ENCODE measurements at regions of chr5 and their contacts with region 1.

Region 1: DNA sequence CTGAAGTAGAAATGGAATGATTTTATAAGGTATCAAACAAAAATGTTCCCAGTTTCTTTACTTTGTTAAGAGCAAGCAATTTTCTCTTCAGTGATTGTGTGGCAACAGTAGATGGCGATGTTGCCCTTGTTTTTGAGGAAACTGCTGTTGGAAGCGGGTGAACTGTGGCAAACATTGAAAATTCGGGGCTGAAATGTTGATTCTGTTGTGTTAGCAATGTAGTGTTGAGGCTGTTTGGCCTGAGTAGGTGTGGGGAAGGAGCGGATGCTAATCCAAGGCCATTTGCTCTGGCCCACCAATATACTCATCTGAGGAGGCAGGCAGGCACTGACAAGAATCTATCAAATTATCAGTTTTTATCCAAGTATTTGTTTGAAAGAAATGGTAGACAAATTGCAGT is 129.8 kb downstream of the SLC12A2 start:
- DNase-seq: peak; percentile 40 to 52
- H3K4me3 ChIP-seq: no peak overlapping the region
- H3K27ac ChIP-seq: no peak overlapping the region
- H3K4me1 ChIP-seq: no peaks in the 10 kb centered on the region
- H3K27me3 ChIP-seq: no peaks in the 10 kb centered on the region
- CTCF ChIP-seq: peak; percentile 88

Region 2: GRCh38 chr5:127447827-127448226 is 765.5 kb before region 1 on chr5:
- CTCF ChIA-PET with region 1: no interaction called
- POLR2A ChIA-PET with region 1: no interaction called
- intact Hi-C with region 1: no loop called
- DNase-seq: no peak
- H3K4me3 ChIP-seq: no peak overlapping the region
- H3K27ac ChIP-seq: no peak overlapping the region
- H3K4me1 ChIP-seq: no peaks in the 10 kb centered on the region
- H3K27me3 ChIP-seq: no peaks in the 10 kb centered on the region
- CTCF ChIP-seq: no peak

Region 3: GRCh38 chr5:128498844-128499455 is 285.6 kb after region 1 on chr5:
- CTCF ChIA-PET with region 1: no interaction called
- POLR2A ChIA-PET with region 1: no interaction called
- intact Hi-C with region 1: loop called (anchors 1 kb)
- DNase-seq: no peak
- H3K4me3 ChIP-seq: no peak overlapping the region
- H3K27ac ChIP-seq: no peak overlapping the region
- H3K4me1 ChIP-seq: no peaks in the 10 kb centered on the region
- H3K27me3 ChIP-seq: no peaks in the 10 kb centered on the region
- CTCF ChIP-seq: peak; percentile 67

Region 4: DNA sequence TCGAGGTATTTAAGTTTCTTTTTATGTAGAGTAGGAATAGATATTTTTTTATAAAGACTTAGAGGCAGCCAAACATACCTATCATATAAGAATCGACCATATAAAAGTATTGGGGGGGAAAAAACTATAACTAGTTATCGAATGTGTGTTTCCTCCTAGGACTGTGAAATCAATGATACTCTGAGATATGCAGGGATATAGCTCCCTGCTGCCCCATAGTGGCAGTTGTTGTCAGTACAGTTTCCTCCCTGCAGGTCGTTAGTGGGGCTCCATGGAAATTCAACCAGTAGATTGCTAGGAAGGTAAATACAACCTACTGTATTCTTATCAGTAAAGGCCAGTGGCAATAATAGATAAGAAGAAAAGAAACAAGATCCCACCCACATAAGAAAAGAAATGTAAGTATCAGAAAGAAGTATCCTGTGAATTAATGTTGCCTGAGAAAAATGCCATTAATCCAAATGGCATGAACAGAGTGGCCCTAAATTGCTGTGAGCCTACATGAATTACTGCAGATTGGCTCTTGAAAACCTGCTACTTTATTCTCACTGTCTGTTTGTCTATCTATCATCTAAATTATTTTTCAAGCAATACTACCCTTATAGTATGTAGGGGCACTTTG is 461.6 kb after region 1 on chr5:
- CTCF ChIA-PET with region 1: no interaction called
- POLR2A ChIA-PET with region 1: no interaction called
- intact Hi-C with region 1: loop called (anchors 1 kb)
- DNase-seq: peak in 1 of 2 experiments; percentile 37
- H3K4me3 ChIP-seq: no peak overlapping the region
- H3K27ac ChIP-seq: no peak overlapping the region
- H3K4me1 ChIP-seq: no peaks in the 10 kb centered on the region
- H3K27me3 ChIP-seq: no peaks in the 10 kb centered on the region
- CTCF ChIP-seq: peak; percentile 71

Region 5: DNA sequence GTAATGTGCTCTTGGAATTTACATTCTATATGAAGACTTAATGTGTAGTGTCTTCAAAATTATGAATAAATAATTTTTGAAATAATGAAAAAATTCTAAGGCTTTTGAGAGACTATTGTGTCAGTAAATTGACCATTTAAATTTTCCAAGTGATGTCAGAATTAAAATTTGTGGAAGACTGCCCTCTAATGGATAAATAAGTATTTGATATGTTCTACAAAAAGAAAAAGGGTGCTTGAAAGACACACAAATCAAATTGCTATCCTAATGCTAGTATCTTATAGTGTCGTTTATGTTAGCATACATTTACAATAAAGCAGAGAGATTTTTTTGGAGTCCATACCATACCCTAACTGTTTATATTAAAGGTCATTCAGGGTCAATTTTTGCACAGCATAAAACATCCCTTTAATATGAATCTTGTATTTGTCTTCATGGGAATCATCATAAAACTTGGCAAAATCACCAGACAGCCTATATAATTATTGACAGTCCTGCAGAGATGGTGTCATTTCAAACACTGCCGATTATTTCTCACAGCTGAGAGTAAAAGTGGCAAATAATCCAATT is 631.1 kb after region 1 on chr5:
- CTCF ChIA-PET with region 1: no interaction called
- POLR2A ChIA-PET with region 1: no interaction called
- intact Hi-C with region 1: loop called (anchors 2 kb)
- DNase-seq: no peak
- H3K4me3 ChIP-seq: no peak overlapping the region
- H3K27ac ChIP-seq: no peak overlapping the region
- H3K4me1 ChIP-seq: no peaks in the 10 kb centered on the region
- H3K27me3 ChIP-seq: no peaks in the 10 kb centered on the region
- CTCF ChIP-seq: peak; percentile 65; the same call in 1 of the 2 replicates

Region 6: DNA sequence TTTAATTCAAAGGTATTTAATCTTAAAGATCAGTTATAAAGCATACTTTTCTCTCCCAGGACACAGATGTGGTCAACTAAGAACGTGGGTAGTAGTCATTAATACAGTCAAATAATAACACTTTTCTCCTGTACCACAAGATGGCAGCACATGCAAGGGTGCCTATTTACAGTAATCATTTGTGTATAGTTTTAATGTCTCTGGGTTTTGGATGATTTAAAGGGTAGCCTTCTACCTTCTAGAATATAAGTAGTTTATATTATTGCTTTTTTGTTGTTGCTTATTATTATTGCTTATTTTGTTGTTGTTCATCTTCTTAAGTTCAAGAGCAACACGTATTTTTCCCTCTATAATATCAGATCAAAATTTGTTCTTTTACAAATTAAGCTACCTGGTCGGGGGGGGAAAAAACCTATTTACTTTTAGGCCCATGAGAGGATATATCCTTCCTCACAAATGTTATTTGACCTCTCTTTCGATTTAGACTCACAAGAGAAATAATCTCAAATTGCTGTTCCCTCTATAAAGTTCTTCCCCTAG is 692.3 kb after region 1 on chr5:
- CTCF ChIA-PET with region 1: no interaction called
- POLR2A ChIA-PET with region 1: no interaction called
- intact Hi-C with region 1: loop called (anchors 5 kb)
- DNase-seq: peak; percentile 10 to 48
- H3K4me3 ChIP-seq: no peak overlapping the region
- H3K27ac ChIP-seq: no peak overlapping the region
- H3K4me1 ChIP-seq: no peaks in the 10 kb centered on the region
- H3K27me3 ChIP-seq: no peaks in the 10 kb centered on the region
- CTCF ChIP-seq: peak; percentile 88